PC-3 (cell line): ENCODE measurements at regions of chr13 and their contacts with region 1.

Region 1: GRCh38 chr13:28796938-28797257 is 23.2 kb upstream of the MTUS2 start:
- DNase-seq: no peak
- ATAC-seq: no peak
- H3K4me3 ChIP-seq: no peak overlapping the region
- H3K27ac ChIP-seq: no peak overlapping the region
- H3K4me1 ChIP-seq: peaks cover 4% of the 10 kb centered on the region; the same call in 1 of the 2 replicates
- H3K27me3 ChIP-seq: peaks cover 31% of the 10 kb centered on the region
- CTCF ChIP-seq: no peak

Region 2: DNA sequence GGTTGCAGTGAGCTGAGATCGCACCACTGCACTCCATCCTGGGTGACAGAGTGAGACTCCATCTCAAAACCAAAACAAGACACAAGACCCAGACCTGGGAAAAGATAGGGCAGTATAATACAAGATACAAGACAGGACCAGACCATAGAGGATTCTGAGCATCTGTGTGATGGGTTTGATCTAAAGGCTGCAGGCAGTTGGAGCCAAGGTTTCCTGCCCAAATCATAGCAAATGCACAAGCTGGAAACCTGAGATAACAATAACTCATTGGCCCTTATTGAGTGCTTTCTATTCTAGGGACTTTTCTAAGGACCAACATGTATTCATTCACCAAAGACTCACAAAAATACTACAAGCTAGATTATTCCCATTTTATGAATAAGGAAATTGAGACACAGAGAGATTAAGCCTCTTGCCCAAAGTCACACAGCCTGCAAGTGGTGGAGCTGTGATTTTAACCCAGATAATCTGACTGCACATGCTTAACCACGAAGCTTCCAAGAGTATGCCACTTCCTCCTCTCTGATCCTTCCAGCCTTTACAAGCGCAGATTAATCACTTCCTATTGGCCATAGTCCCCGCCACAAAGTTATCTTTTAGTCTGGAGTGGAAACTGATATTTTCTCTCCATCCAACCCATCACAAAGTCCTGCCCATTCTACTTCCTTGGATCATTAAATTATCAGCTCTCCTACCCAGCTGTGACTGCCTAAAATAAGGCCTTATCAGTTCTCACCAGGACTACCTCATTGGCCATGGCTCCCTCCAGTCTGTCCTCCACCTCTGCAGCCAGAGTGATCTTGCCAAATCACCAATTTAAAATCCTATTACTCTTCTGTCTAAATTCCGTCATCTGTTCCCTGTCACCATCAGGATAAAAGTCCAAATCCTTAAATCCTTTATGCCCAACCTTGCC is 449.2 kb before region 1 on chr13:
- CTCF ChIA-PET with region 1: no interaction called
- POLR2A ChIA-PET with region 1: no interaction called
- intact Hi-C with region 1: no loop called
- DNase-seq: peak; percentile 14
- ATAC-seq: no peak
- H3K4me3 ChIP-seq: no peak overlapping the region
- H3K27ac ChIP-seq: no peak overlapping the region
- H3K4me1 ChIP-seq: no peaks in the 10 kb centered on the region
- H3K27me3 ChIP-seq: peaks cover 35% of the 10 kb centered on the region
- CTCF ChIP-seq: no peak

Region 3: GRCh38 chr13:28679628-28680027 is 117.3 kb before region 1 on chr13:
- CTCF ChIA-PET with region 1: interaction called, 13 read pairs
- POLR2A ChIA-PET with region 1: no interaction called
- intact Hi-C with region 1: loop called (anchors 1 kb)
- DNase-seq: peak; percentile 35
- ATAC-seq: no peak
- H3K4me3 ChIP-seq: no peak overlapping the region
- H3K27ac ChIP-seq: no peak overlapping the region
- H3K4me1 ChIP-seq: no peaks in the 10 kb centered on the region
- H3K27me3 ChIP-seq: no peaks in the 10 kb centered on the region
- CTCF ChIP-seq: peak; percentile 62

Region 4: DNA sequence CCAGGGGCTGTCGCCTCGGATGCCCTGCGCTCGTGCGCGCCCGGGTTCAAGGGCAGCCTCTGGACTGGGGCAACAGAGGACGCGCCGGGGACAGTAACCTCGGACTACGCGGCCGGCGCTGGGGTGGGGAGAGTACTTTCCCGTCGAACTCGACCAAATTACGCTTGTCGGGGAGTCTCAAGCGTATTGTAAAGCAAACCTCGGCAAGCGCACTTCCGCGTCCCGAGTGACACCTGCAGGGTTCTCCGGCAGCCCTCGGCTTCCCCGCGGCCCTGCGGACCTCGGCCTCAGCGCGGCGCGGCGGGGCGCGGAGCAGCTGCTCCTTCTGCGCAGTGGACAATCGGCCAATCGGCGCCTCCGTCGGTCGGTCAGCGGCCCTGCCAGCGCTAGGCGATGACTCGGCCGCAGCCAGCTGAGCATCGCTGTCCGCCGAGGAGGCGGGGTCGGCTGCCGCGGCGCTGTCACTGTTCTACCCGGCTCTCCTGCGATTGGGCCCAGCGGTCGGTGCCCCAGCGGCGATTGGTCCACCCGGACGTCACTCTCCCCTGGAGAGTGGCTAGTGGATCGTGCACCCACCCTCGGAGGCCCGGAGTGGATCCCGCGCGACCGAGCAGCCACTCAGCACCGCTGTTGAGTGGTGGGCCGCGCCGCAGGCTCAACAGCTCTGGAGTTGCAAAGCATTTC is 78.2 kb before region 1 on chr13 and contains the start of gene SLC46A3:
- CTCF ChIA-PET with region 1: interaction called, 4 read pairs
- POLR2A ChIA-PET with region 1: no interaction called
- intact Hi-C with region 1: loop called (anchors 1 kb)
- DNase-seq: peak; percentile 84
- ATAC-seq: peak; percentile 94
- H3K4me3 ChIP-seq: peak within 1 kb of the TSS; percentile 71
- H3K27ac ChIP-seq: peak within 1 kb of the TSS; percentile 46
- H3K4me1 ChIP-seq: peaks cover 32% of the 10 kb centered on the region
- H3K27me3 ChIP-seq: no peaks in the 10 kb centered on the region
- CTCF ChIP-seq: no peak
- total RNA-seq, gene SLC46A3: 0.84 and 1.4 TPM in 2 replicates

Region 5: DNA sequence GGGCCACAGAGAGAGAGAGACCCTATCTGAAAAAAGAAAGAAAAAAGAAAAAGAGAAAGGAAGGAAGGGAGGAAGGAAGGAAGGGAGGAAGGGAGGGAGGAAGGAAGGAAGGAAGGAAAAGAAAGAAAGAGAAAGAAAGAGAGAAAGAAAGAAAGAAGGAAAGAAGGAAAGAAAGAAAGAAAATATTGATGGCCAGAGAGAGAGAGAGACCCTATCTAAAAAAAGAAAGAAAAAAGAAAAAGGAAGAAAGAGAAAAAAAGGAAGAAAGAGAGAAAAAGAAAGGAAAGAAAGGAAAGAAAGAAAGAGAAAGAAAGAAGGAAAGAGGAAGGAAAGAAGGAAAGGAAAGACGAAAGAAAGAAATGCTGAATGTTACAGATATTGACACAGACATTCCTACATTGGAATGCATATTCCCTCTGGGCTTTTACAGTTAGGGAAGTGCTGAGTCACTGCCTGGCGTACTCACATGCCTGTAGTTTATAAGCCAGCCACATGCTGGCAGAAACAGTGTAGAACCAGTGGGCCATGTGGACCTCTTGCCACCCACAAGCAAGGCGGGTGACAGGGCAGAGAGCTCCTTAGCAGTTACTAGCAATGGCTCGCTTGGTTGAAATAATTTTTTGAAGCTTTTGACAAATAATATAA is 43.5 kb before region 1 on chr13:
- CTCF ChIA-PET with region 1: interaction called, 3 read pairs
- POLR2A ChIA-PET with region 1: no interaction called
- intact Hi-C with region 1: loop called (anchors 5 kb)
- DNase-seq: peak; percentile 92
- ATAC-seq: peak; percentile 96
- H3K4me3 ChIP-seq: peak overlapping the region; percentile 44; the same call in 1 of the 2 replicates
- H3K27ac ChIP-seq: peak overlapping the region; percentile 76
- H3K4me1 ChIP-seq: peaks cover 26% of the 10 kb centered on the region
- H3K27me3 ChIP-seq: no peaks in the 10 kb centered on the region
- CTCF ChIP-seq: no peak